ENCODE measurements at regions of chr3 and their contacts with region 1.

Region 1: GRCh38 chr3:124905849-124906248 is 18.7 kb upstream of the ITGB5 start:
- DNase-seq: no peak
- H3K4me3 ChIP-seq: no peak overlapping the region
- H3K27ac ChIP-seq: no peak overlapping the region
- H3K4me1 ChIP-seq: no peaks in the 10 kb centered on the region; a peak in 1 of 4 replicates
- H3K27me3 ChIP-seq: no peaks in the 10 kb centered on the region
- CTCF ChIP-seq: no peak
- EP300 ChIP-seq: no peak
- RAD21 ChIP-seq: no peak

Region 2: GRCh38 chr3:124659175-124659574 is 246.7 kb before region 1 on chr3:
- CTCF ChIA-PET with region 1: no interaction called
- POLR2A ChIA-PET with region 1: no interaction called
- DNase-seq: no peak
- H3K4me3 ChIP-seq: no peak overlapping the region
- H3K27ac ChIP-seq: no peak overlapping the region
- H3K4me1 ChIP-seq: peaks cover 0 to 4% of the 10 kb centered on the region in 2 experiments; a peak in 1 of 4 replicates
- H3K27me3 ChIP-seq: no peaks in the 10 kb centered on the region
- CTCF ChIP-seq: no peak
- EP300 ChIP-seq: no peak
- RAD21 ChIP-seq: no peak

Region 3: DNA sequence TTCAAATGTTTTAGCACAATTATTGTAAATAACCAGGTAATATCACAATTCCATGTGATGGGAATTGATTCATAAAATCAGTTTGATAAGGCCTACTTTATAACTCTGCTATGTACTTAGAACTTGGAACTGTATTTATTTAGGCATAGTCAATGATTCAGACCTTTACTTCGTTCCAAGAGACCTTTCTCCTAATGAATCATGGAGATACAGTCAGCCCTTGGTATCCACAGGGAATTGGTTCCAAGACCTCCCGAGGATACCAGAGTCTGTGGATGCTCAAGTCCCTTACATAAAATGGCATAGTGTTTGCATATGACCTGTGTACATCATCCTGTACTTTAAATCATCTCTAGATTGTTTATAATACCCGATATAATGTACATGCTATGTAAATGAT is 236.4 kb before region 1 on chr3:
- CTCF ChIA-PET with region 1: no interaction called
- POLR2A ChIA-PET with region 1: no interaction called
- DNase-seq: no peak
- H3K4me3 ChIP-seq: no peak overlapping the region
- H3K27ac ChIP-seq: peak overlapping the region in 1 of 2 experiments; percentile 58; a peak in 2 of 4 replicates
- H3K4me1 ChIP-seq: no peaks in the 10 kb centered on the region; a peak in 1 of 4 replicates
- H3K27me3 ChIP-seq: no peaks in the 10 kb centered on the region
- CTCF ChIP-seq: no peak
- EP300 ChIP-seq: peak in 1 of 2 experiments; percentile 38; a peak in 1 of 4 replicates
- RAD21 ChIP-seq: no peak

Region 4: GRCh38 chr3:124741027-124741426 is 164.8 kb before region 1 on chr3:
- CTCF ChIA-PET with region 1: interaction called, 10 read pairs
- POLR2A ChIA-PET with region 1: no interaction called
- DNase-seq: no peak
- H3K4me3 ChIP-seq: no peak overlapping the region
- H3K27ac ChIP-seq: no peak overlapping the region
- H3K4me1 ChIP-seq: no peaks in the 10 kb centered on the region
- H3K27me3 ChIP-seq: no peaks in the 10 kb centered on the region
- CTCF ChIP-seq: no peak
- EP300 ChIP-seq: no peak
- RAD21 ChIP-seq: no peak

Region 5: GRCh38 chr3:124826703-124827102 is 79.1 kb before region 1 on chr3:
- CTCF ChIA-PET with region 1: interaction called, 11 read pairs
- POLR2A ChIA-PET with region 1: no interaction called
- DNase-seq: no peak
- H3K4me3 ChIP-seq: no peak overlapping the region
- H3K27ac ChIP-seq: peak overlapping the region; percentile 45 to 72
- H3K4me1 ChIP-seq: peaks cover 16 to 28% of the 10 kb centered on the region in 2 experiments; a peak in 2 of 4 replicates
- H3K27me3 ChIP-seq: no peaks in the 10 kb centered on the region
- CTCF ChIP-seq: no peak
- EP300 ChIP-seq: peak in 1 of 2 experiments; percentile 13; a peak in 1 of 4 replicates
- RAD21 ChIP-seq: no peak

Region 6: DNA sequence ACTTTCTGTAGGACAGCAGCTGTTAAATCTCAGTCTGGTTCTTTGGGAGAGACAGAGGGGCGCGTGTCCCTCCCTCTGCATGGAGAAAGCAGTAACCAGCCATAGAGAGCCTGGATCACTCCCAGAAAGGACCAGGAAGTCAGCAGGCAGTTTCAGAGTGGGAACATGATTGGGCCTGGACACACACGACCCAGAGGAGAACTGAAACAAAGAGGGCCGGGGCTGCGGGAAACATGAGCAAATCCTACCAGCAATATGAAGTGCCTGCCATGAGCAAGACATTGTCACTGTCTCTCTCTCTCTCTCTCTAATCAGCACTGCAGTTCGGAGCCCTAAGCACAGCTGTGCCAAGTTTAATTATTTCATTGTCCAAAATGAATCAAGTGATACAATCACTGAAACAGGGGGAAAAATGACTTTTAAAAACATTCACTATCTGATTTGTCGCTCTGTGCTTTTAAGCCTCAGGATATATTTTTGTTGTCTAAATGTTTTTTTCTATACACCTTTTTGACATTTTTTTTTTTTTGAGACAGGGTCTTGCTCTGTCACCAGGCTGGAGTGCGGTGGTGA is 11.1 kb after region 1 on chr3:
- CTCF ChIA-PET with region 1: interaction called, 31 read pairs
- POLR2A ChIA-PET with region 1: no interaction called
- DNase-seq: peak; percentile 51
- H3K4me3 ChIP-seq: no peak overlapping the region
- H3K27ac ChIP-seq: peak overlapping the region in 1 of 2 experiments; percentile 56; a peak in 2 of 4 replicates
- H3K4me1 ChIP-seq: peaks cover 0 to 37% of the 10 kb centered on the region in 2 experiments; a peak in 1 of 4 replicates
- H3K27me3 ChIP-seq: no peaks in the 10 kb centered on the region
- CTCF ChIP-seq: no peak
- EP300 ChIP-seq: peak in 1 of 2 experiments; percentile 50; a peak in 1 of 4 replicates
- RAD21 ChIP-seq: no peak

Region 7: GRCh38 chr3:125154800-125155269 is 249.0 kb after region 1 on chr3:
- CTCF ChIA-PET with region 1: no interaction called
- POLR2A ChIA-PET with region 1: no interaction called
- DNase-seq: no peak
- H3K4me3 ChIP-seq: no peak overlapping the region
- H3K27ac ChIP-seq: no peak overlapping the region
- H3K4me1 ChIP-seq: peaks cover 3% of the 10 kb centered on the region in 2 experiments; a peak in 1 of 4 replicates
- H3K27me3 ChIP-seq: no peaks in the 10 kb centered on the region
- CTCF ChIP-seq: no peak
- EP300 ChIP-seq: no peak
- RAD21 ChIP-seq: no peak

Region 8: DNA sequence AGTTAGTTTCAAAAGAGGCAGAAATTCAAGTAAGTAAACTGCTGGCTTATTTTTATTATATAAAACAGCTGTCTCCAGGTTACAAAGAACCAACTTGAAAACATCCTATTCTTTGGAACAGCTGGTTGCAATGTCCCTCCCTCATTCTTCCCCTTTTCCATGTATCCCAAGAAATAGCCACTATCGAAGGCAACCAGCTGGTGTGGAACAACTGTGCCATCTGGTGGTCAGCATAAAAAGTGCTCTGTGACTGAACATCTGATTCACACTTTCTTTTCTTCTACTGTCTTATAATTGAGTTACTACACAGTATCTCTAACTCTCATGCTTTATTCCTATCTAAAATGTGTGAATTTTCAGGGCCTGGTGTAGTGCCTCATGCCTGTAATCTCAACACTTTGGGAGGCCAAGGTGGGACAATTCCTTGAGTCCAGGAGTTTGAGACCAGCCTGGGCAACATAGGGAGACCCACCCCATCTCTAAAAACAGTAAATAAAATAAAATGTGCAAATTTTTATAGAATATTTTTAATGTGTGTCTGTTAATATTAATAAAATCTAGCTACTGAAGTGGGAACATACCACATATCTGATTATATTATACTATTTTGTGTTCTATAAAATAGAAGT is 679.9 kb after region 1 on chr3:
- CTCF ChIA-PET with region 1: interaction called, 10 read pairs
- POLR2A ChIA-PET with region 1: no interaction called
- DNase-seq: peak; percentile 66
- H3K4me3 ChIP-seq: peak overlapping the region in 1 of 2 experiments; percentile 9; a peak in 1 of 4 replicates
- H3K27ac ChIP-seq: no peak overlapping the region
- H3K4me1 ChIP-seq: peaks cover 5 to 6% of the 10 kb centered on the region in 2 experiments; a peak in 3 of 4 replicates
- H3K27me3 ChIP-seq: no peaks in the 10 kb centered on the region
- CTCF ChIP-seq: peak; percentile 94
- EP300 ChIP-seq: no peak
- RAD21 ChIP-seq: peak; percentile 97

Measured in SK-N-SH (cell line).